ENCODE measurements at regions of chr1 and their contacts with region 1.

Region 1: DNA sequence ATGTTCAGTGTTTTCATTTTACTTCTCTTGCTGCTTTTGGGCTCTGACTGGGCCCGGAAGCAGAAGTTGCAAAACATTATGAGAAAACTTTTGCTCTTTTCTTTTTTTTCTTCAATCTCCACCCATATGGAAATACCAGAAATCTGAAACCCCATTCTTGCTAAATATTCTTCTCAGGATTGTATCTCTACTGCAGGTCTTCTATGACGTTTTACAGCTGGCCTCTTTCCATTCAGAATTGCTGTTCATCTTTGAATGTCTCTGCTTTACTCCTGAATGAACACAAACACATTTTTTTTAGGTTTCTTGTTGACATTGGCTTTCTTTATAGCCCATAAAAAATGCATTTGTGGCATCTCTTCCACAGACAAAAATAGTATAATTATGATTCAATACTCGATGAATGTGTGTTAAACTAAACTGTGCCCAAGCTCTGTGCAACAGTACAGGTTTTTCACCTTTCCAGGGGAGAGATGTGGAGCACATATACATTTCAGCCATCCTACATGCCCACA is 18.8 kb downstream of the PTPRC start:
- DNase-seq: peak; percentile 45 to 93
- H3K4me3 ChIP-seq: no peak overlapping the region
- H3K27ac ChIP-seq: peak overlapping the region; percentile 70
- H3K4me1 ChIP-seq: peaks cover 28% of the 10 kb centered on the region
- H3K27me3 ChIP-seq: no peaks in the 10 kb centered on the region
- CTCF ChIP-seq: no peak

Region 2: DNA sequence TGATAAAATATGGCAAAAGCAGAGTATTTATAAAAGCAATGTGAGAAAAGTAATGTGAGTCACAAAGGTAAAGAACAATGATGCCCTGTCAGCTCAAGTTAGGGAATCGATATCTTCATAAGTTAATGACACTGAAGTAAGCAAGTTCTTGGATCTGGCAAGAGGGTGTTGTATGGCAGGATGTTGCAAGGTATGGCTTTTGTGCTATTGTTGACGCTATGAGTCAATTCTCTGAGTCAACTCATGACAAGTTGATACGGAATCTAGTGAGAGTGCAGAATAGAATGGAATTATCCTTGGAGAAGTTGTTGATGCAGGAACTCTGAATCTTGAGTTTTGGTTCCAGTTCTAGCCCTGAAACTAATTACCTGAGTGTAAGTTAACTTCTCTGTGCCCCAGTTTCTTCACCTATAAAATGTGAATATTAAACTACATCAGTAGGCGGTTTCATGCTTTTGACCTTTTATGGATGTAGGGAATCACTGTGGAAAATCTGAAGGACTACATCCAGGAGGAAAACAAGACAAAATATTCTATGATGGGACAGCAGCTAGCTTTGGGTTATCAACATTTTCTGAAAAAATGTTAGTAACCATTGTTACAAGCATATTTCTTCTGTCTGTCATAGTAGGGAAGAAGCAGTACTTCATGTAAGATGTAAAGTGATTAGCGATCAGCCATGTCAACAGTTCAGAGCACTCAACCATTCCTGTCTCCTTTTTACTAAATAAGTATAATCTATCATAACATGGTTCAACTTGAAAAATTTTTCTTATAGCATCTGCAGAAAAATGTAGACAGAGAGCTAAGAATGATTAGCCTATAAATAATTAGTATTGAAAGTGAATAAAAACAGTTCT is 214.0 kb before region 1 on chr1:
- CTCF ChIA-PET with region 1: no interaction called
- POLR2A ChIA-PET with region 1: no interaction called
- intact Hi-C with region 1: loop called (anchors 1 kb)
- DNase-seq: peak; percentile 54 to 95
- H3K4me3 ChIP-seq: no peak overlapping the region
- H3K27ac ChIP-seq: peak overlapping the region; percentile 89
- H3K4me1 ChIP-seq: peaks cover 20% of the 10 kb centered on the region
- H3K27me3 ChIP-seq: no peaks in the 10 kb centered on the region
- CTCF ChIP-seq: no peak

Region 3: GRCh38 chr1:198575798-198576641 is 81.6 kb before region 1 on chr1:
- CTCF ChIA-PET with region 1: no interaction called
- POLR2A ChIA-PET with region 1: no interaction called
- intact Hi-C with region 1: loop called (anchors 5 kb)
- DNase-seq: no peak
- H3K4me3 ChIP-seq: no peak overlapping the region
- H3K27ac ChIP-seq: no peak overlapping the region
- H3K4me1 ChIP-seq: no peaks in the 10 kb centered on the region
- H3K27me3 ChIP-seq: no peaks in the 10 kb centered on the region
- CTCF ChIP-seq: no peak

Region 4: GRCh38 chr1:198669023-198669698 is 11.6 kb after region 1 on chr1:
- CTCF ChIA-PET with region 1: no interaction called
- POLR2A ChIA-PET with region 1: interaction called, 11 read pairs
- intact Hi-C with region 1: loop called (anchors 1 kb)
- DNase-seq: peak; percentile 63 to 82
- H3K4me3 ChIP-seq: no peak overlapping the region
- H3K27ac ChIP-seq: peak overlapping the region; percentile 36
- H3K4me1 ChIP-seq: peaks cover 25% of the 10 kb centered on the region
- H3K27me3 ChIP-seq: no peaks in the 10 kb centered on the region
- CTCF ChIP-seq: no peak